HEK293 (cell line): ENCODE measurements at regions of chr12 and their contacts with region 1.

Region 1: DNA sequence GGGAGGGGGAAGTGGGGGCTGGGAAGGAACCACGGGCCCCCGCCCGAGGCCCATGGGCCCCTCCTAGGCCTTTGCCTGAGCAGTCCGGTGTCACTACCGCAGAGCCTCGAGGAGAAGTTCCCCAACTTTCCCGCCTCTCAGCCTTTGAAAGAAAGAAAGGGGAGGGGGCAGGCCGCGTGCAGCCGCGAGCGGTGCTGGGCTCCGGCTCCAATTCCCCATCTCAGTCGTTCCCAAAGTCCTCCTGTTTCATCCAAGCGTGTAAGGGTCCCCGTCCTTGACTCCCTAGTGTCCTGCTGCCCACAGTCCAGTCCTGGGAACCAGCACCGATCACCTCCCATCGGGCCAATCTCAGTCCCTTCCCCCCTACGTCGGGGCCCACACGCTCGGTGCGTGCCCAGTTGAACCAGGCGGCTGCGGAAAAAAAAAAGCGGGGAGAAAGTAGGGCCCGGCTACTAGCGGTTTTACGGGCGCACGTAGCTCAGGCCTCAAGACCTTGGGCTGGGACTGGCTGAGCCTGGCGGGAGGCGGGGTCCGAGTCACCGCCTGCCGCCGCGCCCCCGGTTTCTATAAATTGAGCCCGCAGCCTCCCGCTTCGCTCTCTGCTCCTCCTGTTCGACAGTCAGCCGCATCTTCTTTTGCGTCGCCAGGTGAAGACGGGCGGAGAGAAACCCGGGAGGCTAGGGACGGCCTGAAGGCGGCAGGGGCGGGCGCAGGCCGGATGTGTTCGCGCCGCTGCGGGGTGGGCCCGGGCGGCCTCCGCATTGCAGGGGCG is at the start of gene GAPDH:
- H3K4me3 ChIP-seq: peak within 1 kb of the TSS; percentile 73
- H3K27ac ChIP-seq: peak within 1 kb of the TSS; percentile 93
- H3K4me1 ChIP-seq: peaks cover 12% of the 10 kb centered on the region
- CTCF ChIP-seq: no peak

Region 2: GRCh38 chr12:6335451-6336078 is 198.5 kb before region 1 on chr12:
- CTCF ChIA-PET with region 1: interaction called, 6 read pairs
- POLR2A ChIA-PET with region 1: interaction called, 36 read pairs
- H3K4me3 ChIP-seq: peak overlapping the region; percentile 28
- H3K27ac ChIP-seq: peak overlapping the region; percentile 90
- H3K4me1 ChIP-seq: peaks cover 27% of the 10 kb centered on the region
- CTCF ChIP-seq: peak; percentile 77

Region 3: GRCh38 chr12:6416596-6416995 is 117.5 kb before region 1 on chr12:
- CTCF ChIA-PET with region 1: no interaction called
- POLR2A ChIA-PET with region 1: no interaction called
- H3K4me3 ChIP-seq: no peak overlapping the region
- H3K27ac ChIP-seq: no peak overlapping the region
- H3K4me1 ChIP-seq: no peaks in the 10 kb centered on the region
- CTCF ChIP-seq: no peak

Region 4: DNA sequence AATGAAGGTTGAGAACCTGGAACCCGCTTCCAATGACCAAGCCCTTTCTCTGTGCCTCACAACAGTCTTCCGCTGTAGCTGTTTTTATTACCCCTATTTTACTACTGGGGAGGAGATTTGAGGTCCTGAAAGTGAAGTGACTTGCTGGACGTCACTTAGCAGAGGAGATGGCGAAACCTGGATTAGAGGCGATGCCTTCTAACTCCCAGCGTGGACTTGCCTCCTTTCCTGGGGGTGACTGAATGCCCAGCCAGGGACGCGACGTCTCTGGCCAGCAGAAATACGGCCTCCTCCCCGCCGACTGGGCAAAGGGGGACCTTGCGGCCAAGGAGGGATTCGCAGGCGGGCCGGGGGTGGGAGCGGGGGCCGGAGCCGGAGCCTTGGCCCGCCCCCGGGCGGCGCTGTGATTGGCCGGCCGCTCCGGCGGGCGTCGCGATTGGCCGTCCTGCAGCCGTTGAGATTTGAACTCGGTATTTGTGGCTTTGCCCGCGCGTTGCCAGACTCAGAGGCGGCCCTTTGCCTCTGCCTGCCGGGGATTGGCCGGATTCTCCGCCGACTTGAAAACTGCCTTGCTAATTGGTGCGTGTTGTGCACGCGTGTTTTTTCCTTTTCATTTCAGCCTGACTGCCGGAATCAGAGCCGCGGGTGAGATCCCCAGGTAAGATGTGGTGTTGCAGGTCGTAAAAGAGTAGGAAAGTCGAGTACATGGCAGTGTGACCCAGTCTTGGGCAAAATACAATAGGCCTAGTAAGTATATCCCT is 40.4 kb before region 1 on chr12 and contains the start of gene NCAPD2:
- CTCF ChIA-PET with region 1: interaction called, 10 read pairs
- POLR2A ChIA-PET with region 1: interaction called, 51 read pairs
- H3K4me3 ChIP-seq: peak within 1 kb of the TSS; percentile 93
- H3K27ac ChIP-seq: peak within 1 kb of the TSS; percentile 94
- H3K4me1 ChIP-seq: peaks cover 7% of the 10 kb centered on the region; the same call in 1 of the 2 replicates
- CTCF ChIP-seq: peak; percentile 55; the same call in 1 of the 2 replicates

Region 5: DNA sequence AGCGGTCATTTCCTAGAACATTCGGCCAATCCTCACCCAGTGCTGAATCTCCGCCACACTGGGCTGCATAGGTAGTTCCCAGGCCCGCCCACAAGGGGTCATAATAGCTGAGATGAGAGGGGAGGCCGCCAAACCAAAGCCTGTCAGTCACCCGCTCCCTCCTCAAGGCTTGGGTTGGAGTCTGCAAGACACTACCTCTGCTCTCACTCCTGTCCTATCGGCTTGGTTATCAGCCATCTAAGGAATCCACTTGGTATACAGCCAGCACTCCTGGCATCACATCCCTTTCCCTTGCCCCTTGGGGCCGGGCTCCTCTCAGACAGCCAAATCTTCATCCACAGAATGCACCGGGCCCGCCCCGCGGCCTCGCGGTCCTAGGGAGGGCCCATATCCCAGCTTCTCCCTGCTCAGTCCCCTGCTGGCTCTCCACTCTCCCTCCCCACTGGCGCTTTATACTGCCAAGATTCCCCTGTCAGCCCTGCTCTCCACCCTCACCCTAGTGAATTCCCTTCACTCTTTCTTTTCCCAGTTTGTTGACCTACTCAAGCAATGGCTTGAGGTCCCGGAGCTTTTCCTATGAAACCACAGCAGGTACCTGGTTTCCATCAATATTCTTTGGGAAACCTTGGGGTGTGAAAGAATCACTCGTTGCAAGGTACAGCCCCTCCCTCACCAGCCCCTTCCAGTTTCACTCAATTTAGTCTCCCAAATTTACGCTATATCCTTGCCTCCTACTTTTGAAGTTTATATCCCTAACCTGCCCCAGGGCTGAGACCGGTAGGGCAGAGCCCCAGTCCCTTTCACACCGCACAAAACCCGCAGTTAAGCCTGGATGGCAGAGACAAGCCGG is 20.3 kb after region 1 on chr12:
- CTCF ChIA-PET with region 1: interaction called, 51 read pairs
- POLR2A ChIA-PET with region 1: interaction called, 90 read pairs
- H3K4me3 ChIP-seq: peak overlapping the region; percentile 88
- H3K27ac ChIP-seq: peak overlapping the region; percentile 80
- H3K4me1 ChIP-seq: peaks cover 18% of the 10 kb centered on the region
- CTCF ChIP-seq: peak; percentile 82

Region 6: DNA sequence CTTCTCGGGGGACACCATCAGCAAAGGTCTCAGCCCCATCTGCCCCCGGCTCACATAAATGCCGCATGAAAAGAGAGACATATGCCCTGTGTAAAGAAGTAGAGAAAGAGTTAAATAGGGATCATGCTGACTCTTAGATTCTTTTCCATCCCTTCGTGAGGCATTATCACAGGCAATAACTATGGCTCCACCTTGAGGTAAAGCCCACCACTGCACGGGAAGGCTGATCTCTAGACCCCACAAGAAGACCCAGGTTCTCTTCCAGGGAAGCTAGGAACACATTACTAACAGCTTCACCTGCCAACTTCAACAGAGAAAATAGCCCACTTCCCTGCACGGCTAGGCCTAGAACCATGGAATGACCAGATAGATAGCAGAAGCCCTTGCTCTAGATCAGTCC is 48.1 kb after region 1 on chr12:
- CTCF ChIA-PET with region 1: no interaction called
- POLR2A ChIA-PET with region 1: no interaction called
- H3K4me3 ChIP-seq: no peak overlapping the region
- H3K27ac ChIP-seq: no peak overlapping the region
- H3K4me1 ChIP-seq: no peaks in the 10 kb centered on the region
- CTCF ChIP-seq: peak; percentile 23; the same call in 1 of the 2 replicates

Region 7: DNA sequence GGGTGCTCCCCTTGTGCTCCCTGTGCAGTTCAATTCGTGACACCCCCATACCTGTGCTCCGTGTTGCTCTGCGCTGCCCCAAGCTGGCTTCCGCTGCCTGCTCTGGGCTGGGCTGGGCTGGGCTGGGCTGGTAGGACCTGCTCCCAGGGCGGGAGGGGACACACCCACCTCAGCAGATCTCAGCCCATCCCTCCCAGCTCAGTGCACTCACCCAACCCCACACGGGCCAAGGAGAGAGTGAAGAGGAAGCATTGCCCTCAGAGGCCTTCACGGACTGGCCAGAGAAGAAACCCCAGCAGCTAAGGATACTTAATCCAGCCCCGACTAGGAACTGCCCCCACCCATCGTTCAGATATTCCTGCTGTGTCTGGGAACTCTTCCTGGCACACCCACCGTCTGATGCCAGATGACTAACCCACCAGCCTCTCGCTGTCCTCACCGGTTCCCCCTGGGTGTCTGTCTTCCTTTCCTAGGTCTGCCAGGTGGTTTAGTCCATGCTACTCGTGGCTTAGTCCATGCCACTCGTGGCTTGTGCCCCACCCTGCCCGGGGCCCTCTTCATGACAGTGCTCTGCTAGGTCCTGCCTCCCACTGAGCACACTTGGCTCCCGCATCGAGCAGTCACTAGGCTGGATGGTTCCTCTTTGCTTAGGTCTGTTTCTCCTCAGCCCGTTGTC is 101.9 kb after region 1 on chr12 and contains the start of gene LPAR5:
- CTCF ChIA-PET with region 1: no interaction called
- POLR2A ChIA-PET with region 1: no interaction called
- H3K4me3 ChIP-seq: no peak within 1 kb of the TSS
- H3K27ac ChIP-seq: no peak within 1 kb of the TSS; the same call in 1 of the 2 replicates
- H3K4me1 ChIP-seq: peaks cover 3% of the 10 kb centered on the region; the same call in 1 of the 2 replicates
- CTCF ChIP-seq: no peak

Region 8: DNA sequence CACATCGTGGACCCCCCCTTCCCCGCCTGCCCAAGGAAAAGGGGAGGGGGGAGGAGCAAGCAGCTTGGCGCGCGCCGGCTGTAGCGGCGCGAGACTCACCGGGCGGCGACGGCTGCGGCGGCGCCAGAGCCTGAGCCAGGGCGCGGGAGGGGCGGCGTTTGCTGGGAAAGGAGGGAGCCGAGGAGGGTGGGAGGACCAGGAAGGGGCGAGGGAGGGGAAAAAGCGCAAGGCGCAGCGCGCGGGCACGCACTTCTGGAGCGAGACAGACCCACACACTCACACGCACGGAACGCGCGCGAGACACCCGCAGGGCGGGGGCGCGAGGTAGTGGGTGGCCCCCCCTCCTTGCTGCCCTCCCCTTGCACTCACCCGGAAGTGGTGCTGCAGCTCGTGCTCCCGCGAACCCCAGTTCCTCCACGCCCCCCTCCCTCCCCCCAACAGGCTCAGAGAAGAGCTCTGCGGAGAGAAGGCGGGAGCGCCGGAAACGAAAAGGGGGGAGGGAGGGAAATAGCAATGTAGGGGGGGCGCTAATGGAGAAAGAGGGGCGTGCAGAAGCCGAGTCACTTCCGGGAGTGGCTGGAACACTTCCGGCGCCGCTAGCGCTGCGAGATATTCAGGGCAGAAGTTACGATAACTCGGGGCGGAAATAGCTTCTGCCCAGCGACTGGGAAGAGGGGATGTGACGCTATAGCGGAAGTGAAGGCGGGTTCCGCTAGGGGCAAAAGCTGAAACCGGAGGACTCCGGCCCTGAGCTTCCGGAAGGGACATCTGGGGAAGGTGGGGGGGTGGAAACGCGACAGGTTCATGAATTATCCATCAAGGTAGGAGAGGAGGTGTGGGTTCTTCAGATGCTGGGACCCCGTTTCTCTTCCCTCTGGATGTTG is 155.1 kb after region 1 on chr12 and contains the start of gene ZNF384:
- CTCF ChIA-PET with region 1: no interaction called
- POLR2A ChIA-PET with region 1: interaction called, 36 read pairs
- H3K4me3 ChIP-seq: peak within 1 kb of the TSS; percentile 73
- H3K27ac ChIP-seq: peak within 1 kb of the TSS; percentile 99
- H3K4me1 ChIP-seq: peaks cover 13% of the 10 kb centered on the region
- CTCF ChIP-seq: peak; percentile 69; the same call in 1 of the 2 replicates

Region 9: DNA sequence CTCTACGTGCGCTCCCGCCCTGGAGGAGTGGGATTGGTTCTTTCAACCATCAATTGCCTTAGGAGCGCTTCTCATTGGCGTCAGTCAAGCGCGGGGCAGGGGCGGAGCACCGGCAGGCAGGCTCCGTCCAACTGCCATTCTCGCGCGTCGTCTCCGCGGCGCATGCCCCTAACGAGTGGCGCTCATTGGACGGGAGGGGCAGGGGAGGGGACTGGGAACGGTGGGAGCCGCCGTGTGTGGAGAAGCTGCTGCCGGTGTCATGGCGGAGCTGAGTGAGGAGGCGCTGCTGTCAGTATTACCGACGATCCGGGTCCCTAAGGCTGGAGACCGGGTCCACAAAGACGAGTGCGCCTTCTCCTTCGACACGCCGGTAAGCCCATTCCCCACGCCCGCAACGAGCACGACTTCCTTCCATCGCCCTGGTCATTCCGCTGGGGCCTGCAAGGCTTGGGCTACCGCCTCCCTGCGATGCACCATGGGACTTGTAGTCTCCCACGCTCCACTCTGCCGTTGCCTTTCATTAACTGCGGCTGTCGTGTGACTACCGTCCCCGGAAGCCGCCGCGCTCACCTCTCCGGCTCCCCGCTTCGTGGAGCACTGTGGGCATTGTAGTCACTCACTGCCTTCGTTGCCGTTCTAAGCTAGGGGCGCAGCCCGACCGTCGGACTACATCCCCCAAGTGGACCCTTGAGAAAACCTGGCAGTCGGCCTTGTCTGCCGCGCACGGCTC is 318.0 kb after region 1 on chr12 and contains the start of gene USP5:
- CTCF ChIA-PET with region 1: no interaction called
- POLR2A ChIA-PET with region 1: interaction called, 21 read pairs
- H3K4me3 ChIP-seq: peak within 1 kb of the TSS; percentile 76
- H3K27ac ChIP-seq: peak within 1 kb of the TSS; percentile 58
- H3K4me1 ChIP-seq: peaks cover 11% of the 10 kb centered on the region
- CTCF ChIP-seq: peak; percentile 70